ACHN (cell line): ENCODE measurements at regions of chr2 and their contacts with region 1.

Region 1: DNA sequence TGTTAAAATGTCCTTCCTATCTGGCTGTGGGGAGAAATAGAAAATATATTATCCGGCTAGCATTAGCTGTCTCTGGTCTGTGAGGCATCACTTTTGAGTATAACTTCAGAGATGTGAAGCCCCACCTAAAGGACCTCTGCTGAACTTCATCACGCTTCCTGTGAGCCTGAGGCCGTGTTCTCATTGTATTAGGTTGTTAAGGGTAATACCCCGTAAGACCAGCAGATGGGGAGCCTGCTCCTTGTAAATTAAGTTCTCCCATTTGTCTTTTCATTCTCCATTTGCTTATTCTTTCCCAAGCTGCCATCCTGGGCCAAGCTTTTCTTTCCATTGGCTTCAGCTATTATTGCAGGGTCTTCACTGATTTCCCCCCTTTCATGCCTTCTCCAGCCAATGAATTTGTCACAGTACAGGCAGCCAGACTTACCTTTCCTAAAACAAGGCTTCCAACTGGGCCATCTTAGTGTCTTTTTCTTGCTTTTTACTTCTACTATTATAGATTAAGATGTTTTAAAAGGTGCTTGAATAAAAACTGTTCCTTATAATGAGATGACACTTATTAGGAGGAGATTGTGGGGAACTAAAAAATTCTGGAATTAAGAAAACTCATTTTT is 12.4 kb downstream of the NIF3L1 start:
- DNase-seq: peak; percentile 94

Region 2: GRCh38 chr2:200795044-200795443 is 106.5 kb before region 1 on chr2:
- in situ Hi-C with region 1: no loop called
- DNase-seq: peak; percentile 14

Region 3: DNA sequence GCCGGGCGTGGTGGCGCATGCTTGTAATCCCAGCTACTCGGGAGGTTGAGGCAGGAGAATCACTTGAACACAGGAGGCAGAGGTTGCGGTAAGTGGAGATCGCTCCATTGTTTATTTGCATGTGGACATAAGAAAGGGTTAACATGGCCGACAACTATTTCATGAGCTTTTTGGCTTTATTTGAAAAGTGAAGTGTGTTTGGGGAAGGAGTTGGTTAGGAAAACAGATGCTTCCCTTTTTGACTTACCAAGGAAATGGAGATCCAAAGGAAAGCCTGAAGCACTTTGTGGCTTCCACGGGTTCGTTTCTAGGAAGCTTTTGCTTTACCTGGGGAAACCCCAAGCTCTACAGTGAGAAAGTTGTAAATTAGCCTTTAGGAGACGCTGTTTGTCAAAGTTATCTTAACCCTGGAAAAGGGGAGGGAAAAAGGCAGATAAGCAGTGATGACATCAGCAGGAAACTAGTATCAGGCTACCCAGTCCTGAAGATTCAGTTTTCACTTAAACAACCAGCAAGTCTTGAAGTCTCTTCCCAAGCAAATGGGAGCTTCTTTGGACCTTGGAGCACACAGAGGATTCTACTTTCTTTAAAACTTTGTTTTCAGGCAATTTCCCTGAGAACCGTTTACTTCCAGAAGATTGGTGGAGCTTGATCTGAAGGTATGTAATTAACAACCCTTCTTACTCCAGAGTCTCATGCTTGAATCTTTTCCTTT is 281.2 kb after region 1 on chr2 and contains the start of gene CASP10:
- in situ Hi-C with region 1: loop called (anchors 10 kb)
- DNase-seq: peak; percentile 93